ENCODE measurements at regions of chr19 and their contacts with region 1.

Region 1: GRCh38 chr19:49512970-49513745 is 697 bp downstream of the FCGRT start:
- DNase-seq: peak; percentile 73 to 90 (median 89)
- ATAC-seq: peak; percentile 77 to 85
- H3K4me3 ChIP-seq: peak overlapping the region; percentile 78
- H3K27ac ChIP-seq: peak overlapping the region; percentile 95
- H3K4me1 ChIP-seq: peaks cover 3% of the 10 kb centered on the region
- H3K27me3 ChIP-seq: no peaks in the 10 kb centered on the region

Region 2: GRCh38 chr19:49421039-49421877 is 91.9 kb before region 1 on chr19:
- intact Hi-C with region 1: no loop called
- DNase-seq: peak; percentile 80 to 93 (median 90)
- ATAC-seq: peak; percentile 70 to 87
- H3K4me3 ChIP-seq: peak overlapping the region; percentile 4
- H3K27ac ChIP-seq: no peak overlapping the region
- H3K4me1 ChIP-seq: no peaks in the 10 kb centered on the region
- H3K27me3 ChIP-seq: no peaks in the 10 kb centered on the region

Region 3: GRCh38 chr19:49560358-49560900 is 47.3 kb after region 1 on chr19:
- intact Hi-C with region 1: loop called in 1 of 4 experiments (anchors 5 kb)
- DNase-seq: no peak
- ATAC-seq: no peak
- H3K4me3 ChIP-seq: no peak overlapping the region
- H3K27ac ChIP-seq: no peak overlapping the region
- H3K4me1 ChIP-seq: no peaks in the 10 kb centered on the region
- H3K27me3 ChIP-seq: no peaks in the 10 kb centered on the region

Measured in right cardiac atrium (tissue), 5 donors.